ENCODE measurements at regions of chr1 and their contacts with region 1.

Region 1: GRCh38 chr1:212124690-212125582 is 89.4 kb downstream of the DTL start:
- DNase-seq: no peak
- ATAC-seq: no peak

Region 2: GRCh38 chr1:212234431-212235395 is 109.8 kb after region 1 on chr1:
- intact Hi-C with region 1: loop called (anchors 5 kb)
- DNase-seq: no peak
- ATAC-seq: peak; percentile 96

Measured in Right ventricle myocardium inferior (tissue), 1 donor.